A549 (cell line): ENCODE measurements at regions of chr11 and their contacts with region 1.

Region 1: GRCh38 chr11:62419314-62419929 is 589 bp downstream of the SCGB1A1 start:
- DNase-seq: no peak
- ATAC-seq: no peak
- H3K4me3 ChIP-seq: no peak overlapping the region
- H3K27ac ChIP-seq: peak overlapping the region in 1 of 2 experiments; percentile 17; a peak in 1 of 6 replicates
- H3K4me1 ChIP-seq: peaks cover 4% of the 10 kb centered on the region; the same call in 1 of the 3 replicates
- CTCF ChIP-seq: no peak
- EP300 ChIP-seq: no peak
- POLR2A ChIP-seq: no peak
- RAD21 ChIP-seq: no peak

Region 2: DNA sequence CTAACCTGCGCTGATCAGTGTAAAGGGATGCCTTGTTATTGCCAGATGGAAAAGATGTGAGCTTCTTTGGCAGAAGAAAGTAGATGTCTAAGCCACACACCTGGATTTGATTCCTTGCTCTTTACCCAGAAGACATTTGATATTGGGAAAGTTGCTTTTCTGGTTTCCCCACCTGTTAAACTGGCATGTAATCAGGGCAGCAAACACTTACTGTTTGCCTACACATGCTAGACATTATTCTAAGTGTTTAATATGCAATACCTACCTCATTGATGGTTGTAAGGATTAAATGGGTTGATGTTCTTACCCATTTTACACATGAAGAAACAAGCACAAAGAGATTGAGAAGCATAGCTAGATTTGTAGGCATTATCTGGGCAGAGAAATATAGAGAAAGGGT is 65.6 kb before region 1 on chr11:
- CTCF ChIA-PET with region 1: no interaction called
- POLR2A ChIA-PET with region 1: no interaction called
- DNase-seq: no peak
- ATAC-seq: no peak
- H3K4me3 ChIP-seq: no peak overlapping the region
- H3K27ac ChIP-seq: no peak overlapping the region
- H3K4me1 ChIP-seq: no peaks in the 10 kb centered on the region
- CTCF ChIP-seq: no peak
- EP300 ChIP-seq: no peak
- POLR2A ChIP-seq: no peak
- RAD21 ChIP-seq: no peak

Region 3: GRCh38 chr11:62400760-62401159 is 18.7 kb before region 1 on chr11:
- CTCF ChIA-PET with region 1: interaction called, 86 read pairs
- POLR2A ChIA-PET with region 1: interaction called, 3 read pairs
- DNase-seq: no peak
- ATAC-seq: no peak
- H3K4me3 ChIP-seq: no peak overlapping the region
- H3K27ac ChIP-seq: peak overlapping the region in 1 of 2 experiments; percentile 48; a peak in 2 of 6 replicates
- H3K4me1 ChIP-seq: peaks cover 22% of the 10 kb centered on the region
- CTCF ChIP-seq: no peak
- EP300 ChIP-seq: no peak
- POLR2A ChIP-seq: no peak
- RAD21 ChIP-seq: no peak

Region 4: GRCh38 chr11:62461740-62462507 is 42.5 kb after region 1 on chr11:
- CTCF ChIA-PET with region 1: interaction called, 23 read pairs
- POLR2A ChIA-PET with region 1: interaction called, 3 read pairs
- DNase-seq: peak in 1 of 2 experiments; percentile 38
- ATAC-seq: peak; percentile 23 to 44; a peak in 3 of 6 replicates
- H3K4me3 ChIP-seq: no peak overlapping the region
- H3K27ac ChIP-seq: peak overlapping the region in 1 of 2 experiments; percentile 43; a peak in 3 of 6 replicates
- H3K4me1 ChIP-seq: peaks cover 27% of the 10 kb centered on the region
- CTCF ChIP-seq: no peak
- EP300 ChIP-seq: no peak
- POLR2A ChIP-seq: no peak
- RAD21 ChIP-seq: no peak

Region 5: DNA sequence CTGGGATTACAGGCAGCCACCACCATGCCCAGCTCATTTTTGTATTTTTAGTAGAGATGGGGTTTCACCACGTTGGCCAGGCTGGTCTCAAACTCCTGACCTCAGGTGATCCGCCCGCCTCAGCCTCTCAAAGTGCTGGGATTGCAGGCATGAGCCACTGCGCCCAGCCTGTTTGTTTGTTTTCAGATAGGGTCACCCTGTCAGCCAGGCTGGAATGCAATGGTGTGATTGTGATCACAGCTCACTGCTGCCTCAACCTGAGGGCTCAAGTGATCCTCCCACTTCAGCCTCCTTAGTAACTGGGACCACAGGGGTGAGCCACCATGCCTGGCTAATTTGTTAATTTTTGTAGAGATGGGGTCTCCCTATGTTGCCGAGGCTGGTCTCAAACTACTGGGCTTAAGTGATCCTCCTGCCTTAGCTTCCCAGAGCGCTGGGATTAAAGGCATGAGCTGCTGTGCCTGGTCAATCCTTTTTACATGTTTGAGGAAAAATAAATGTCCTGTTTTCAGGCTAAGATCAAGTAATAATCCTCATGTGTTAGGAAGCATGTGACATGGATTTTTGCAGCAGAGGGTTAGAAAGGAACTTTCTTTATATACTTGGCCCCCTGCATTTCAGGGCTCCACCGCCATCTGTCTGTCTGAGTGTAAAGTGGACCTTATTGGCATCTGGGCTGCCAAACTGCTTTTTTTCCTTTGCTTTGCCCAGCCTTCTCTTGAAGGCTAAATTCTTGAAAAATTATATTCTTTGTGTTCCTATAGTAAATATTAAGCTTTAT is 456.5 kb after region 1 on chr11:
- CTCF ChIA-PET with region 1: no interaction called
- POLR2A ChIA-PET with region 1: no interaction called
- DNase-seq: no peak
- ATAC-seq: no peak
- H3K4me3 ChIP-seq: no peak overlapping the region
- H3K27ac ChIP-seq: no peak overlapping the region
- H3K4me1 ChIP-seq: peaks cover 14% of the 10 kb centered on the region
- CTCF ChIP-seq: no peak
- EP300 ChIP-seq: no peak
- POLR2A ChIP-seq: no peak
- RAD21 ChIP-seq: no peak